Ascending aorta (tissue), 2 donors: ENCODE measurements at regions of chr5 and their contacts with region 1.

Region 1: DNA sequence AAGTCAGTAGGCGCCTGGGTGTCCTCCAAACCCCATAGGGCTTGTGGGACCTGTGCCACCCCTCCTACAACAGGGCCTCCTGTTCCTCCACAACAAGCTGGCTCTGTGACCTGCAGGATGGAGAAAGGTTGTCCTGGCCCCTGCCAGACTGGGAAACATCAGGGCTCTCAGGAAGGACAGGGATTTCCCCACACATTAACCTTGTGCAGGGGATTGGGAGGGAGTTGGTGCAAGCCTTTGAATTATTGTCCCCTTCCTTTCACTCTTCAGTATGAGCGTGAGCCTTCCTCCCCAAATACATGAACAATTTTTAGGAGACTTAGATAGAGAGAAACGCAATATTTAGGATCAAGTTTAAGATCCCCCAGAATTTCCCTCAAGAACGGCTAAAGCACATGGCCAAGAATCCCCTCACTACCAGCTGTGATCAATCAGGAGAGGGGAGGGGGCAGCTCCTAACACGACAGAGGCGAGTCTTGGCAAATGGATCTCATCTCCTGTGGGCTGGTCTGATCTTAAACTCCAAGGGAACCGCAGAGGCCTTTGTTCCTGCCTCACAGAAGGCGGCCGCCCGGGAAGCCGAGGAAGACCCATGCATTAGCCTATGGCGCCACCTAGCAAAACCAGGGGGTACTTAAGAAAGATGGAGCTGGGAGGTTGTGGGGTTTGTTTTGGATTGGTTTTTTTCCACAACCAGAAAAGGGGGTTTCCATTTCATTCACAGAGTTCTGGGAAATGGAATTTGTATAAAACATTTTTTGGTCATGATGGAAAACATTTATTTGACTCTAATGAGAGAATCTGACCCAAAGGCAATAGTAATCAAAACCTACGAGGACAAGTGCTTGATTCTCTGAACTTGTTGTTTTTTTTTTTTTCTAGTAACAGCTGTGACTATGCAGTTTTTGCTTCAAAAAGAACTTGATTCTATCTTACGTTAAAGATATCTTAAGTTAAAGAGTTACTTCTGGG is 36.1 kb upstream of the OSMR start:
- DNase-seq: peak; percentile 23 to 86
- H3K4me3 ChIP-seq: no peak overlapping the region
- H3K27ac ChIP-seq: no peak overlapping the region
- H3K4me1 ChIP-seq: no peaks in the 10 kb centered on the region
- H3K27me3 ChIP-seq: no peaks in the 10 kb centered on the region
- CTCF ChIP-seq: peak; percentile 79 to 87 (median 81)

Region 2: DNA sequence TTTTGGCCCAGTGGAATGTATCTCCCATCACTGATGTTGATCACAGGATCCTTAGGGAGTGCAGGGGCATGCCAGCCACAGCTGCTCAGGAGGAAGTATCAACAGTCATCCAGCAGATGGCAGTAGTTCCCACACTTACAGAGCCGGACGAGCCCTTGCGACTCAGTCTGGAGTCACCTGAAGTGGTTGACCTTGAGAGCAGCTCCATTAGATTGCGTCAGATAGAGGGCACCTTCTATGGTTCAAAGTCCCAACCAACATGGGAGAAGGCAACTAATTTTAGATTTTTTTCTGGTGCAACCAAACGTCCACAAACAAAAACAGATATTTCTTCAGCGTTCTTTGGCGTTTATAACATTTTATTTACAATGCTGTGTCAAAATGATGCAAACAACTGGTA is 426.8 kb before region 1 on chr5:
- intact Hi-C with region 1: loop called (anchors 2 kb)
- DNase-seq: peak; percentile 14 to 69
- H3K4me3 ChIP-seq: no peak overlapping the region
- H3K27ac ChIP-seq: no peak overlapping the region
- H3K4me1 ChIP-seq: no peaks in the 10 kb centered on the region
- H3K27me3 ChIP-seq: no peaks in the 10 kb centered on the region
- CTCF ChIP-seq: peak; percentile 69 to 88 (median 84)

Region 3: GRCh38 chr5:38758774-38759600 is 50.7 kb before region 1 on chr5:
- intact Hi-C with region 1: no loop called
- DNase-seq: no peak
- H3K4me3 ChIP-seq: no peak overlapping the region
- H3K27ac ChIP-seq: no peak overlapping the region
- H3K4me1 ChIP-seq: no peaks in the 10 kb centered on the region
- H3K27me3 ChIP-seq: no peaks in the 10 kb centered on the region
- CTCF ChIP-seq: no peak

Region 4: DNA sequence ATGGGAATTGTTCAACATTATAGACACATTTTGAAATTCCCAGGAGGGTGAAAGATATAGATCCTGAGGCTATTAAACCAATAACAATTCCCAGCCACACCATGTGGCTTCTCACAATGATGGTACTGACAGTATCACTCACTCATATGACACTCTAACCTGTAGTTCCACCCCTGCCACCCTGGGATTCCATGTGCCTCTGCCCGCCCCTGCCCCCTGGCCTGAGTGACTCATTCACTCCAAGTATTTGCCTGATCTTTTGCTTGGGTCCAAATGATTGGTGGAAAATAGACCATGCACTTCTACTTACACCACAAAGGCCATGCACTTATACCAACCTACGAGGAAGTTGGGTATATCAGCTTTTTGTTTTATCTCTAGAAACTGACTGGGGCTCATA is 920.3 kb after region 1 on chr5:
- intact Hi-C with region 1: no loop called
- DNase-seq: no peak
- H3K4me3 ChIP-seq: no peak overlapping the region
- H3K27ac ChIP-seq: no peak overlapping the region
- H3K4me1 ChIP-seq: no peaks in the 10 kb centered on the region
- H3K27me3 ChIP-seq: no peaks in the 10 kb centered on the region
- CTCF ChIP-seq: no peak